HCT116 (cell line): ENCODE measurements at regions of chr10 and their contacts with region 1.

Region 1: GRCh38 chr10:71868192-71868697 is 17.2 kb upstream of the PSAP start:
- DNase-seq: no peak
- ATAC-seq: no peak
- H3K4me3 ChIP-seq: no peak overlapping the region
- H3K27ac ChIP-seq: no peak overlapping the region
- H3K4me1 ChIP-seq: peaks cover 25 to 41% of the 10 kb centered on the region in 2 experiments
- H3K27me3 ChIP-seq: no peaks in the 10 kb centered on the region
- CTCF ChIP-seq: no peak
- POLR2A ChIP-seq: no peak
- RAD21 ChIP-seq: no peak

Region 2: DNA sequence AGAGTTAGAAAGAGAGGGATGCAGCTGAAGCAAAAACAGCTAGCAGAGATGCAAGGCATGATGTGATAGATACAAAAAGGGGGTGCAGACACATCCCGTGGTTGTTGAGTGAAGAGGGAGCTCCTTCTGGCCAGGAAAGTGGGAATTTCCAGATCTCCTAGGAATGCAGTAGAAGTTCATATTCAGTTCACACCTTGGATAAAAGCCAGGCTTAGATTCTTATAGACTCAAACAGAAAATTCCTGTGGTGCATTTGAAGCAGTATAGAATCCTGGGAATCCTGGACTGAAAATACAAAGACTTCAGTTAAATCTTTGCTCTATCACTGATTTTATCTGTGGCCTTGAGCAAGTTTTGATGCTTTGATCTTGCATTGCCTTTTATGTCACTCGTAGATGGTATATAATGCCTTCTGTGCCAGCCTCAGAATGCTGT is 1018.6 kb before region 1 on chr10:
- CTCF ChIA-PET with region 1: no interaction called
- POLR2A ChIA-PET with region 1: no interaction called
- RAD21 ChIA-PET with region 1: no interaction called
- intact Hi-C with region 1: no loop called
- DNase-seq: no peak
- ATAC-seq: peak; percentile 54; the same call in 1 of the 2 replicates
- H3K4me3 ChIP-seq: no peak overlapping the region
- H3K27ac ChIP-seq: no peak overlapping the region; the same call in 1 of the 2 replicates
- H3K4me1 ChIP-seq: peaks cover 12 to 31% of the 10 kb centered on the region in 2 experiments; a peak in 3 of 4 replicates
- H3K27me3 ChIP-seq: no peaks in the 10 kb centered on the region
- CTCF ChIP-seq: no peak
- POLR2A ChIP-seq: no peak
- RAD21 ChIP-seq: no peak

Region 3: DNA sequence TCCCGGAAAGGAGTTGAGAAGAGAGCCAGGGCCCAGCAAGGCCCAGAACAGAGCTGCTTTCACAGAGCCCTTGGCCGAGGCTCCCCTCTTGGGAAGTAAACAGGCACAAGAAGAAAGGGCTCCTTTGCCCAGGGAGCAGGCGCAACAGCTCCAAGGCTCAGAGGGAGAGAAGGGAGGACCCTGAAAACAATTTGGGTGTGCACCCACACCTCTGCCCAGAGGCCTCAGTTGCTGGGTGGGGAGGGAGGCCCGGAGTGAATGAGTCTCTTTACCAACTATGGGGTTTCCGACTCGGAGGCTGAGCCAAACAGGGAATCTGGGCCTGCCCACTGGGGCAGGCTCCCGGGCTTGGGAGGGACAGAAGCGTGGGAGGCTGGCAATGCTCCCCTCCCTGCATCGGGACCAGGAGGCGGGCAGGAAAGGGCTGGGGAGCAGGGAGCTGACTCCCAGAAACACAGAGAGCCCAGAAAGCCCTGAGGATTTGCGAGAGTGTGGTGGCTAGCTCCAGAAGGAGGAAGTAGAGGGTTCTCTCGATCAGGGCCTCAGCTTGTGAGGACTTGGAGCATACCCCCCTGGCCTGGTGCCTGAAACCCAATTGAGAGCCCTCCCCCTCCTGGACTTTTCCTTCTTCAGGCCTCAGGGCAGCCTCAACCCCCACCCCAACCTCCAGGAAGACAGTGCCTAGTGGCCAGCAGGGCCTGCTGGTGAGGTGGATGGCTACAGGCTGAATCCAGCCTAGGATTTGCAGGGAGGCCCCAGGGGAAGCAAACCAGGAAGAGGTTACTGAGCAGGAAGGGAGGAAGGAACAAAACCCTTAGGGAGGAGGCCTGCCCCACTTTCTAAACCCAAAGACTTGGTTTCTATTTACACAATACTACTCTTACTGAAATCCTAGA is 154.9 kb before region 1 on chr10:
- CTCF ChIA-PET with region 1: no interaction called
- POLR2A ChIA-PET with region 1: no interaction called
- RAD21 ChIA-PET with region 1: no interaction called
- intact Hi-C with region 1: no loop called
- DNase-seq: no peak
- ATAC-seq: peak; percentile 56
- H3K4me3 ChIP-seq: no peak overlapping the region
- H3K27ac ChIP-seq: no peak overlapping the region; the same call in 1 of the 2 replicates
- H3K4me1 ChIP-seq: peaks cover 0 to 13% of the 10 kb centered on the region in 2 experiments; a peak in 2 of 4 replicates
- H3K27me3 ChIP-seq: no peaks in the 10 kb centered on the region
- CTCF ChIP-seq: no peak
- POLR2A ChIP-seq: no peak
- RAD21 ChIP-seq: peak; percentile 18; the same call in 1 of the 2 replicates

Region 4: GRCh38 chr10:71850637-71851464 is 17.4 kb before region 1 on chr10 and contains the start of gene PSAP:
- CTCF ChIA-PET with region 1: interaction called, 3 read pairs
- POLR2A ChIA-PET with region 1: interaction called, 27 read pairs
- RAD21 ChIA-PET with region 1: no interaction called
- intact Hi-C with region 1: no loop called
- DNase-seq: peak; percentile 93
- ATAC-seq: peak; percentile 97
- H3K4me3 ChIP-seq: peak within 1 kb of the TSS; percentile 73 to 98
- H3K27ac ChIP-seq: peak within 1 kb of the TSS; percentile 70
- H3K4me1 ChIP-seq: peaks cover 4 to 30% of the 10 kb centered on the region in 2 experiments; a peak in 3 of 4 replicates
- H3K27me3 ChIP-seq: no peaks in the 10 kb centered on the region
- CTCF ChIP-seq: no peak
- POLR2A ChIP-seq: peak; percentile 94
- RAD21 ChIP-seq: no peak
- total RNA-seq, gene PSAP: 444 TPM